ENCODE measurements at regions of chr9 and their contacts with region 1.

Region 1: DNA sequence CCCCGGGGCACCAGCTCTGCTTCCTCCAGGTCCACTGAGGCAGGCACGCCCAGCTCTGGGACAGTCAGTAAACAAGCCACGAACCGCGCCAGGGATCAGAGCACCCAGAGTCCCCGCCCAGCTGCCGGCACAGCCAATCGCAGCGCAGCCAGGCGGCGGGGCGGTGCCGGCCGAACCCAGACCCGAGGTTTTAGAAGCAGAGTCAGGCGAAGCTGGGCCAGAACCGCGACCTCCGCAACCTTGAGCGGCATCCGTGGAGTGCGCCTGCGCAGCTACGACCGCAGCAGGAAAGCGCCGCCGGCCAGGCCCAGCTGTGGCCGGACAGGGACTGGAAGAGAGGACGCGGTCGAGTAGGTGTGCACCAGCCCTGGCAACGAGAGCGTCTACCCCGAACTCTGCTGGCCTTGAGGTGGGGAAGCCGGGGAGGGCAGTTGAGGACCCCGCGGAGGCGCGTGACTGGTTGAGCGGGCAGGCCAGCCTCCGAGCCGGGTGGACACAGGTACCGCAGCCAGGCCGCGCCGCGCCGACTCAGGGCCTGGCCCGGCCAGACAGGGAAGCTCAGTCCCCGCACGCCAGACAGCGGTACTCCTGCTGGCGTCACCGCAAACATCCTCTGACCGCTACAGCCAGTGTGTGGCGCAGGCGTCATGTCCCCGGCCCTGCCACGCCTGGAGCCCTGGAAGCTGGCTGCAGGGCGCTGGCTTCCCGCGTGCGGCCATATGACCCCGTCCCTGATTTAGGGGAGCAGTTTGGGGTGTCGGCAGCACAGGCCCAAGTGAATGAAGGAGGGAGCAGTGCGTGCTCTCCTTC is at the start of gene CTSL:
- DNase-seq: peak; percentile 89 to 92
- ATAC-seq: peak; percentile 94 to 96
- H3K4me3 ChIP-seq: peak within 1 kb of the TSS; percentile 80
- H3K27ac ChIP-seq: peak within 1 kb of the TSS; percentile 92 to 97
- H3K4me1 ChIP-seq: peaks cover 47% of the 10 kb centered on the region
- CTCF ChIP-seq: peak; percentile 32; the same call in 2 of the 3 replicates
- EP300 ChIP-seq: no peak
- POLR2A ChIP-seq: peak; percentile 99
- RAD21 ChIP-seq: peak; percentile 43 to 48
- polyA plus RNA-seq, gene CTSL: 666 and 725 TPM in 2 replicates

Region 2: DNA sequence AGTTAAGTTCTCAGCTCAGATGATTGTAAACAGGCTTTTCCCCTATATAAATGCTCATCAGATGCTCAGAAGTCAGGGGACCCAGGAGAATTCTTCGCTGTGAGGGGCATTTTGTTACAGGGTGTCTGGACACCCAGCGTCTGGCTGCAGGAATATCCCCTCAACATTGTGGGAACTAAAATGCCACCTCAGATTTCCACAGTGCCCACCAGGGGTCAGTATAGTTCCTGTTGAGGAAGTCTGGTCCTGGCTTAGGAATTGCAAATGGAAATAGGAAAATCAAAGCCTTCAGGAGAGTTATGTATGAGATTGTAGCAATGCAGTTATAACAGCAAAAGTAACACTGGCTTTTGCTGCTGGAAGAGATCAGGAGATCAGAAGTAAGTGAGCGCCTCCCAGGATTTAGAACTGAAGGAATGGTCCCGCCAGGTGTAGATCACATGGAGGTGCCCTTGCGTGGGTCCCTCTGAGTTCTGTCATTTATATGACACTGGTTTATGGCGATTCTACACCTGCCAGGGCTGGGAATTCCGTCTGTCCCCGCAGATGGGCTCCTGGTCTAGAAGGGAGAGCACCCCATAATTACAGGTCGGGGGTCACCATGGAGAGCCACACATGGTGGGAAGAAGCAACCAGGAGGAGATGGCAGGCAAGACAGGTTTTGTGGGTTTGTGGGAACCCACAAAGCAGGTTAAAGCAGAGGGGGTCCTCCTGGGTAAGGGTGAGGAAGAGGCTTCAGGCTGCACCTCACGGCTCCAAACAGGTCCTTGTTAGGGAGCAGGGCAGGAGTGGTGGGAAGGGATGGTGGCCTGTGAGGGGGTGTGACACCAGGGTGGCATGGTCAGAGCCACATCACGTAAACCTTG is 47.2 kb before region 1 on chr9:
- CTCF ChIA-PET with region 1: interaction called, 43 read pairs
- POLR2A ChIA-PET with region 1: interaction called, 3 read pairs
- DNase-seq: peak; percentile 73 to 75
- ATAC-seq: peak; percentile 56 to 85; a peak in 5 of 6 replicates
- H3K4me3 ChIP-seq: no peak overlapping the region
- H3K27ac ChIP-seq: no peak overlapping the region; a peak in 1 of 6 replicates
- H3K4me1 ChIP-seq: peaks cover 7% of the 10 kb centered on the region; the same call in 2 of the 3 replicates
- CTCF ChIP-seq: peak; percentile 82
- EP300 ChIP-seq: no peak
- POLR2A ChIP-seq: no peak
- RAD21 ChIP-seq: peak; percentile 78 to 83

Region 3: DNA sequence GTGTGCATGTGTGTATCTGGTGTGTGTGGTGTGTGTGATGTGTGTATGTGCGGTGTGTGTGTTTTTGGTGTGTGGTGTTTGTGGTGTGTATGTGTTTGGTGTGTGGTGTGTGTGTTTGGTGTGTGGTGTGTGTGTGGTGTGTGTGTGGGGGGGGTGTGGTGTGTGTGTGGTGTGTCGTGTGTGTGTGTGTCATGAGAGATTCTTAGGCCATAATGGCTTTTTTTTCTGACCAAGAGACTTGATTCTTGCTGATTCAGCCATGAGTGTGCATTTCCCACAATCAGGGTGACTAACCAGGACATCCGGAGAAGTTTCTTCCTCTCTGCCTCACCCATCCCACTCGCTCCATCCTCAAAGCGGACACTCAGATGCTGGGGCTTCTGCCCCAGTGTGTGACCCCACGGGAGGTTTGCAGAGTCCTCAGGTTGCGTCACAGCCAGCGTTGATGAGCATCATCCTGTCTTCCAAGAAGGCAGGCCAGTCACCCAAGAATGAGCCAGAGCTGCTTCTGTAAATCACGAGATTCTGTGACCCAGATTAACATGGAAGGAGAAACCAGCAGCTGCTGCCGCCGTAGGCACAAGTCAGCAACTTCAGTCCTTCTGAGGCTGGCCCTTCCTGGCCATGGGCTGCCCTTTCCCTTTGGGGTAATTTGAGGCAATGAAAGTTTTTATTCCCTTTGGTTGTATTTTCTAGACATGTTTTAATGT is 12.7 kb before region 1 on chr9:
- CTCF ChIA-PET with region 1: interaction called, 18 read pairs
- POLR2A ChIA-PET with region 1: interaction called, 75 read pairs
- DNase-seq: peak; percentile 89 to 99
- ATAC-seq: peak; percentile 93
- H3K4me3 ChIP-seq: peak overlapping the region; percentile 24; the same call in 1 of the 3 replicates
- H3K27ac ChIP-seq: peak overlapping the region; percentile 95
- H3K4me1 ChIP-seq: peaks cover 55% of the 10 kb centered on the region
- CTCF ChIP-seq: no peak; the same call in 2 of the 3 replicates
- EP300 ChIP-seq: peak; percentile 92 to 97; a peak in 4 of 5 replicates
- POLR2A ChIP-seq: 0 out of 2 replicates have a peak, but pooled peaks have one; percentile 27
- RAD21 ChIP-seq: peak; percentile 9 to 42; a peak in 2 of 5 replicates

Region 4: DNA sequence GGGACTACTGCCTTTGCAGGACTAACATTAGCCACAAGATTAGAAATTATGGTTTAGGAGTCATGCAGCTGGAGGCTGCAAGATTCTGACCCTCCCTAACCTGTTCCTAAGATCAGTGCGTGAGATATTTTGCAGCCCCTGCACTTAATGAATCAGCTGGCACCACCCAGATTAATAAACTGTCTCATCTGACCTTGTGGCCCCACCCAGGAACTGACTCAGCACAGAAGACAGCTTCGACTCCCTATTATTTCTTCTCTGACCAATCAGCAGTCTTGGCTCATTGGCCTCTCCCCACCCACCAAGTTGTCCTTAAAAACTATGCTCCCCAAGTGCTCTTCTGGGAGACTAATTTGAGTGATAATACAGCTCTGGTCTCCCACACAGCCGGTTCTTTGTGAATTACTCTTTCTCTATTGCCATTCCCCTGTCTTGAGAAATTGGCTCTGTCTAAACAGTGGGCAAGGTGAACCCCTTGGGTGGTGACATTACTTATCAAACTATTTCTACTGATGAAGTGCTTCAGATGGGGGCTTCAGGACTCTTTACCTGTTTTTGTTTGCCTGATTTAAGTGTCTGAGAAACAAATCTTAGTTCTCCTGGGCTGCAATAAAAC is 16.8 kb after region 1 on chr9:
- CTCF ChIA-PET with region 1: interaction called, 12 read pairs
- POLR2A ChIA-PET with region 1: interaction called, 5 read pairs
- DNase-seq: no peak
- ATAC-seq: no peak
- H3K4me3 ChIP-seq: no peak overlapping the region
- H3K27ac ChIP-seq: no peak overlapping the region
- H3K4me1 ChIP-seq: peaks cover 5% of the 10 kb centered on the region; the same call in 1 of the 3 replicates
- CTCF ChIP-seq: no peak
- EP300 ChIP-seq: no peak
- POLR2A ChIP-seq: no peak
- RAD21 ChIP-seq: no peak

Region 5: DNA sequence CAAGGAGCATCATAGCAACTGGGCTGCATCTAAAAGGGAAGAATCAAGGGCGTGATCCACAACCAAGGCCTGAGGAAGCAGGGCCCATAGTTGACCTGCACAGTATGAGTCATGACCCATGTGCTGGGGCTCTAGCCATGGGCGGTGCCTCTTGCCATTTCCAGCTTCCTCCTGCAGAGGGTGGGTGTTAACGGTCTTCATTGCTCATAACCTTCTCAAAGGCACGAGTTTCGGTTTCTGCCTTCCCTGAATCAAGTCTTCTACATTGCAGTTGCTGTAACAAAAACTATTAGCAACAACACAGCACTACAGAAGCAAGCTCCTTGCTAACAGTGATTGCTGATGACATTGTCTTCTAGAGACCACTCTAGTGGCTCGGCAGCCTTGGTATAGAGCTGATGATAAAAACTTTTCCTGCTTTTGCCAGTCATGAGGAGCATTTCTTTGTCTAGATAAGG is 66.8 kb after region 1 on chr9:
- CTCF ChIA-PET with region 1: interaction called, 3 read pairs
- POLR2A ChIA-PET with region 1: interaction called, 51 read pairs
- DNase-seq: peak; percentile 84 to 95
- ATAC-seq: peak; percentile 97 to 98
- H3K4me3 ChIP-seq: peak overlapping the region; percentile 28
- H3K27ac ChIP-seq: peak overlapping the region; percentile 92 to 94
- H3K4me1 ChIP-seq: peaks cover 42% of the 10 kb centered on the region
- CTCF ChIP-seq: 0 out of 3 replicates have a peak, but pooled peaks have one; percentile 14
- EP300 ChIP-seq: no peak; a peak in 1 of 5 replicates
- POLR2A ChIP-seq: no peak
- RAD21 ChIP-seq: peak in 1 of 2 experiments; percentile 33; a peak in 2 of 5 replicates

Measured in A549 (cell line).